ENCODE measurements at regions of chr17 and their contacts with region 1.

Region 1: GRCh38 chr17:18363101-18364049 is at the start of gene SHMT1:
- DNase-seq: peak; percentile 88 to 99
- H3K4me3 ChIP-seq: peak within 1 kb of the TSS; percentile 75
- H3K27ac ChIP-seq: peak within 1 kb of the TSS; percentile 24; the same call in 1 of the 2 replicates
- H3K4me1 ChIP-seq: peaks cover 10% of the 10 kb centered on the region
- H3K27me3 ChIP-seq: no peaks in the 10 kb centered on the region
- CTCF ChIP-seq: no peak
- total RNA-seq, gene SHMT1: 139 and 170 TPM in 2 replicates

Region 2: DNA sequence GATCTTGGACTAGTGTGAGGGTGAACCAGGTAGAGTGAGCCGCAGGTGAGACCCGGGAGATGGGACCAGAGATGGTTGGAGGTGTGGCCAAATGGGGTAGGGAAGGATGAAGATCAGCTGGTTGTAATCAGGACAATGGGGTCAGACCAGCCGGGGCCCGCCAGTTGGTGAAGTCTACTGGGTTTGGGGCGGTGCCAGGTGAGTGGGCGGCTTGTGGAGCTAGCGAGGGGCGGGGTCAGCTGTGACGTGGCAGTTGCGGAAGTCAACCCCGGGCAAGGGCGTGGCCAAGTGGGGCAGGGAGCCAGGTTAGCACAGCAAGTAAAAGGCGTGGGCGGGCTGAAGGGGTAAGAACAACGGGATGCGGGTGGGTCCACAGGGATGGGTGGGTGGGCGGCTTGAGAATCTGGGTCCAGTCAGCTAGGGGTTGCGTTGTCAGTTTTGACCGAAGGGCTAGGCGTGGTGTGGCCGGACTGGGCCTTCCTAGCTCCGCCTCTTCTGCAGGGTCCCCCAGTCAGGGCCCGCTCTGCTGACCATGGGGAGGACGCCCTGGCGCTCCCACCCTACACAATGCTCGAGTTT is 205.3 kb before region 1 on chr17:
- CTCF ChIA-PET with region 1: no interaction called
- POLR2A ChIA-PET with region 1: no interaction called
- intact Hi-C with region 1: no loop called
- DNase-seq: peak; percentile 69 to 96
- H3K4me3 ChIP-seq: peak overlapping the region; percentile 46; the same call in 1 of the 2 replicates
- H3K27ac ChIP-seq: no peak overlapping the region
- H3K4me1 ChIP-seq: 0 out of 2 replicates have a peak, but pooled peaks cover 5% of the 10 kb centered on the region
- H3K27me3 ChIP-seq: no peaks in the 10 kb centered on the region
- CTCF ChIP-seq: no peak

Region 3: GRCh38 chr17:18377437-18378204 is 14.2 kb after region 1 on chr17 and contains the start of gene EVPLL:
- CTCF ChIA-PET with region 1: no interaction called
- POLR2A ChIA-PET with region 1: interaction called, 4 read pairs
- intact Hi-C with region 1: loop called (anchors 2 kb)
- DNase-seq: peak; percentile 80 to 96
- H3K4me3 ChIP-seq: no peak within 1 kb of the TSS
- H3K27ac ChIP-seq: no peak within 1 kb of the TSS
- H3K4me1 ChIP-seq: peaks cover 25% of the 10 kb centered on the region
- H3K27me3 ChIP-seq: no peaks in the 10 kb centered on the region
- CTCF ChIP-seq: no peak
- total RNA-seq, gene EVPLL: 3.7 and 5.7 TPM in 2 replicates